CD4-positive, alpha-beta T cell (primary cell): ENCODE measurements at regions of chr1 and their contacts with region 1.

Region 1: DNA sequence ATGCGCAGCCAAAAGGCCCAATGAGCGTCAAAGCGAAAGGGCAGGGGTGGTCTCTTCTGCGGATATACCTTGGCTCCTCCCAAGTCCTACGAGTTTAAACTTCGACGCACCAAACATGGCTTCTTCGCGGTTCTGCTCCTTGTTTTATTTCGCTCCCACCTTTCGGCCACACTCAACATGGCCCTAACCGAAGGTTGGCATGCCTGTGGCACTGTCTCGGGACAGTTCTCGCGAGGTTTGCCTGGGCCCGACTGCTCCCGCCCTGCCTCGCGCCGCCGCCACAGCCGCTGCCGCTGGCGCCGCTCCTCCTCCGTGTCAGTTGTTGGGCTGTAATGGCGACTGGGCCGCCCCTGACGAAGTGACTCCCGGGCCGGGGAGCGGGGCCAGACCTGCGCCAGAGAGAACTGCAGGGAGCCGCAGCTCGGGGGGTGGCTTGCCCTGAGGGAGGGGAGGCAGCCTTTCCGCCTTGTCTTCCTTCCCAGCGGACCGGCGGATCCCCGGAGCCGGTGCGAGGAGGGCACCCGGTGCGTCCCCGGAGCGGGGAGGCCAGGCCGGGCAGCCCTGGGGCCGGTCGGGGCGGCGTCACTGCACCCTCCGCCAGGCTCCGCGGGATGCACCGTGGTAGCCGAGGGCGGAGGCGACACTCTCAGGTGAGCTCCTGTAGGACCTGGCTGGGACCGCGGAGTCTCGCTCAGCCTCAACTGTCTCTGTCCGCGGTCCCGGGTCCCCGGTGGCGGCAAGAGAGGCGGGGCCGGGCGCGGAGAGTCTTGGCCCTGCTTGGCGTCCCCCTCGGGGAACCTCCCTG is at the start of gene CEP350:
- DNase-seq: peak; percentile 95 to 100 (median 97)
- ATAC-seq: peak; percentile 84
- H3K4me3 ChIP-seq: peak within 1 kb of the TSS; percentile 87
- H3K4me3 Mint-ChIP-seq: peak within 1 kb of the TSS; percentile 96
- H3K27ac ChIP-seq: peak within 1 kb of the TSS; percentile 82 to 90
- H3K27ac Mint-ChIP-seq: peak within 1 kb of the TSS; percentile 94
- H3K4me1 ChIP-seq: peaks cover 23% of the 10 kb centered on the region
- H3K4me1 Mint-ChIP-seq: peaks cover 71% of the 10 kb centered on the region
- H3K27me3 ChIP-seq: no peaks in the 10 kb centered on the region
- H3K27me3 Mint-ChIP-seq: no peaks in the 10 kb centered on the region
- CTCF ChIP-seq: no peak
- total RNA-seq, gene CEP350: 45.5 to 51.4 TPM

Region 2: GRCh38 chr1:179803104-179803503 is 151.6 kb before region 1 on chr1:
- CTCF ChIA-PET with region 1: no interaction called
- POLR2A ChIA-PET with region 1: no interaction called
- intact Hi-C with region 1: no loop called
- DNase-seq: no peak
- ATAC-seq: no peak
- H3K4me3 ChIP-seq: no peak overlapping the region
- H3K4me3 Mint-ChIP-seq: no peak overlapping the region
- H3K27ac ChIP-seq: no peak overlapping the region
- H3K27ac Mint-ChIP-seq: no peak overlapping the region
- H3K4me1 ChIP-seq: no peaks in the 10 kb centered on the region
- H3K4me1 Mint-ChIP-seq: no peaks in the 10 kb centered on the region
- H3K27me3 ChIP-seq: no peaks in the 10 kb centered on the region
- H3K27me3 Mint-ChIP-seq: no peaks in the 10 kb centered on the region
- CTCF ChIP-seq: no peak

Region 3: DNA sequence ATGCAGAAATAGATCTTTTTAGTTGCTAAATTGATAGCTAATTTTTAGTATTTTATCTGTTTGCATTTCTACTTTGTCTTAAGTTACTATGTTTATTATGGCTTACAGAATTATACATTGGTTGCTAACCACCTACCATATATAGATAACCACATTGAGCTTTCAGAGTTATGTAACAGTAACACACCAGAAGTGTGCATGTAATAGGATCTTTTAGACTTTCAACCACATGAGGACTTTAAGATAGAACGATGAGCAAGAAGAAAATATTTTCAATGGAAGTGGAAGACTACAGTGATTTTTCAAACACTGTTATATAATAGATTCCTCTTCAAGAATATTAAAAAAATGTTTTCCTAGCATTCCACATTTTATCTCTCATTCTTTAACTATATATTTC is 43.8 kb before region 1 on chr1:
- CTCF ChIA-PET with region 1: no interaction called
- POLR2A ChIA-PET with region 1: interaction called, 3 read pairs
- intact Hi-C with region 1: loop called (anchors 5 kb)
- DNase-seq: no peak
- ATAC-seq: no peak
- H3K4me3 ChIP-seq: no peak overlapping the region
- H3K4me3 Mint-ChIP-seq: no peak overlapping the region
- H3K27ac ChIP-seq: no peak overlapping the region
- H3K27ac Mint-ChIP-seq: no peak overlapping the region
- H3K4me1 ChIP-seq: no peaks in the 10 kb centered on the region
- H3K4me1 Mint-ChIP-seq: peaks cover 16% of the 10 kb centered on the region
- H3K27me3 ChIP-seq: no peaks in the 10 kb centered on the region
- H3K27me3 Mint-ChIP-seq: no peaks in the 10 kb centered on the region
- CTCF ChIP-seq: no peak

Region 4: DNA sequence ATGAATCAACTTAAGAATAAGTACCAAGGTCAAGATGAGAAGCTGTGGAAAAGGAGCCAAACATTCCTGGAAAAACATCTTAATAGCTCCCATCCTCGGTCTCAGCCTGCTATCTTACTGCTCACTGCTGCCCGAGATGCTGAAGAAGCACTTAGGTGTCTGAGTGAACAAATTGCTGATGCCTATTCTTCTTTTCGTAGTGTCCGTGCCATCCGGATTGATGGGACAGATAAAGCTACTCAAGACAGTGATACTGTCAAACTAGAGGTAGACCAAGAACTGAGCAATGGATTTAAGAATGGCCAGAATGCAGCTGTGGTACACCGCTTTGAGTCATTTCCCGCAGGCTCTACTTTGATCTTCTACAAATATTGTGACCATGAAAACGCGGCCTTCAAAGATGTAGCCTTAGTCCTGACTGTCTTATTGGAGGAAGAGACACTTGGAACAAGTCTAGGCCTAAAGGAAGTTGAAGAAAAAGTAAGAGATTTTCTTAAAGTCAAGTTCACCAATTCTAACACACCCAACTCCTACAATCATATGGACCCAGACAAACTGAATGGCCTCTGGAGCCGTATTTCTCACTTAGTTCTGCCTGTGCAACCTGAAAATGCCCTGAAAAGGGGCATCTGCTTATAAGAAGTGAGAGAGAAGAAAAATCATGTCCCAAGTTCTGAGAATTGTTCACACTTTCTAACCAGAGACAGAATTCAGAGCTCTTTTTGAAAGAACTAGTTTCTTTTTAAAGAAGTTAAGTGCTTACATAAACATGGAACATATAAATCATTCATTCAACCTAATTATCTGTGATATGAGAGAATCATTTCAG is 36.9 kb before region 1 on chr1:
- CTCF ChIA-PET with region 1: no interaction called
- POLR2A ChIA-PET with region 1: interaction called, 9 read pairs
- intact Hi-C with region 1: loop called (anchors 5 kb)
- DNase-seq: no peak
- ATAC-seq: no peak
- H3K4me3 ChIP-seq: no peak overlapping the region
- H3K4me3 Mint-ChIP-seq: no peak overlapping the region
- H3K27ac ChIP-seq: no peak overlapping the region
- H3K27ac Mint-ChIP-seq: peak overlapping the region; percentile 41
- H3K4me1 ChIP-seq: no peaks in the 10 kb centered on the region
- H3K4me1 Mint-ChIP-seq: peaks cover 7% of the 10 kb centered on the region
- H3K27me3 ChIP-seq: no peaks in the 10 kb centered on the region
- H3K27me3 Mint-ChIP-seq: no peaks in the 10 kb centered on the region
- CTCF ChIP-seq: no peak

Region 5: DNA sequence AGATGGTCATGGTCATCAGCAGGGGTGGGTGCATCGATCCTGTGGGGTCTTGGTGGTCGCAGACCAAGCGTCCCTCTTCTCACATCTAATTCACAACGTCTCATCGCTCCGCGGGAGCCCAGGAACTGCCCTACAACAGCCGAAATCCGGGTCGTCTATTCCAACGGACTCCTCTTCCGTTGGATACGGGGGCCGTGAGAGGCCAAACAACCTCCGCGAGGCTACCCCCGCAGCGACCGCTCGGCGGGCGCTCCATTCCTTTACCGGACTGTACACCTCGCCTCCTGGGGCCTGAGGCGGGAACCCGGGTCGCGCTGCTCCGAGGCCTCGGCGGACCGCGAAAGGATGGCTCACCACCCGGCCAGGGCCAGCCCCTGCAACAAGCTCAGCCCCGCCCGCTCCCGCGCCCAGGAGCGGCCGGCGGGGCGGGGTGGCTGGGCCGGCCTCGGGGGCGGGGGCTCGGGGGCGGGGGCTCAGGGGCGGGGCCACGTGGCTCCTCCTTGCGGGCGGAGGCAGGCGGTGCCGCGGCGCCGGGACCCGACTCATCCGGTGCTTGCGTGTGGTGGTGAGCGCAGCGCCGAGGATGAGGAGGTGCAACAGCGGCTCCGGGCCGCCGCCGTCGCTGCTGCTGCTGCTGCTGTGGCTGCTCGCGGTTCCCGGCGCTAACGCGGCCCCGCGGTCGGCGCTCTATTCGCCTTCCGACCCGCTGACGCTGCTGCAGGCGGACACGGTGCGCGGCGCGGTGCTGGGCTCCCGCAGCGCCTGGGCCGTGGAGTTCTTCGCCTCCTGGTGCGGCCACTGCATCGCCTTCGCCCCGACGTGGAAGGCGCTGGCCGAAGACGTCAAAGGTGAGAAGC is 199.9 kb after region 1 on chr1 and contains the start of gene QSOX1:
- CTCF ChIA-PET with region 1: no interaction called
- POLR2A ChIA-PET with region 1: interaction called, 7 read pairs
- intact Hi-C with region 1: loop called in 1 of 2 experiments (anchors 2 kb)
- DNase-seq: peak; percentile 80 to 97 (median 86)
- ATAC-seq: peak; percentile 97
- H3K4me3 ChIP-seq: peak within 1 kb of the TSS; percentile 90
- H3K4me3 Mint-ChIP-seq: peak within 1 kb of the TSS; percentile 95
- H3K27ac ChIP-seq: peak within 1 kb of the TSS; percentile 19 to 42
- H3K27ac Mint-ChIP-seq: peak within 1 kb of the TSS; percentile 82
- H3K4me1 ChIP-seq: peaks cover 27% of the 10 kb centered on the region
- H3K4me1 Mint-ChIP-seq: peaks cover 33% of the 10 kb centered on the region
- H3K27me3 ChIP-seq: no peaks in the 10 kb centered on the region
- H3K27me3 Mint-ChIP-seq: no peaks in the 10 kb centered on the region
- CTCF ChIP-seq: no peak
- total RNA-seq, gene QSOX1: 13.7 to 14.3 TPM